Activated CD4-positive, alpha-beta memory T cell treated with anti-CD3 and anti-CD28 coated beads for 36 hours (primary cell): ENCODE measurements at regions of chr3 and their contacts with region 1.

Region 1: DNA sequence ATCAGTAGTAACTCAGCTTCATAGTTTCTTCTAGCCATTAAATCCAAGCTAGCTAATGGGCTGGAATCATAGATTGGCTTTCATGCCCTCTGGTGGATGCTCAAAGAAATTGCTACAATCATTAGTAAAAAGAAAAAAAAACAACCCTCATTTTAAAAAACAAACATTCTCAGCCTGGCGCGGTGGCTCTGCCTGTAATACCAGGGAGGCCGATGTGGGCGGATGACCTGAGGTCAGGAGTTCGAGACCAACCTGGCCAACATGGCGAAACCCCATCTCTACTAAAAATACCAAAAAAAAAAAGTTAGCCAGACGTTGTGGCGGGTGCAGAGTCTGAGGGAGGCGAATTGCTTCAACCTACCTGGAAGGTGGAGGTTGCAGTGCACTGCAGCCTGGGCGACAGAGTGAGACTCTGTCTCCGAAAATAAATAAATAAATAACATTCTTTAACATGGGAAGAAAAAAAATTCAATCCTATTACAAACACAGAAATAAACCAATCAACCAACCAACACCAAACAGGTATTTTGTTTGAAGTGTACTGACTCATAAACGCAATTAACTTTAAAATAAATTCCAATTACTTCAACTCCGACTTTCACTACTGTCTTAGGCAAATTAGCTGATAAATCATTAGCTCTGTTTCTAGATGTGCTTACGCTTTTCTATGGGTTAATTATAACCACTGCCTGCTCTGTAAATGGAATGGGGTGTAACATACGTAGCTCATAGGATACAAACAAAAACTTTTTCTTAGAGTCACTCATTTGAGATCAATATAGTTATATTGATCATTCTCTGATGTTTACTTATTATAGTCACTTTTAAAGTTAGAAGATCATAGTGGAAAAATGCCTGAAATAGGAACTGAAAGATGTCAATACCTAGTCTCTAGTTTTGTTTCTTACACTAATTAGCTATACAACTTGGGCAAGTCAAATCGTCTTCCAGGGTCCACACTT is 24.9 kb downstream of the TMEM207 start:
- DNase-seq: peak; percentile 66
- H3K4me3 Mint-ChIP-seq: peak overlapping the region; percentile 24
- H3K27ac Mint-ChIP-seq: no peak overlapping the region
- H3K4me1 Mint-ChIP-seq: peaks cover 8% of the 10 kb centered on the region
- H3K27me3 Mint-ChIP-seq: no peaks in the 10 kb centered on the region

Region 2: GRCh38 chr3:190224863-190225692 is 199.7 kb before region 1 on chr3:
- CTCF ChIA-PET with region 1: interaction called, 11 read pairs
- POLR2A ChIA-PET with region 1: no interaction called
- intact Hi-C with region 1: loop called (anchors 1 kb)
- DNase-seq: no peak
- H3K4me3 Mint-ChIP-seq: no peak overlapping the region
- H3K27ac Mint-ChIP-seq: no peak overlapping the region
- H3K4me1 Mint-ChIP-seq: peaks cover 2% of the 10 kb centered on the region
- H3K27me3 Mint-ChIP-seq: peaks cover 10% of the 10 kb centered on the region

Region 3: GRCh38 chr3:190747571-190747970 is 322.8 kb after region 1 on chr3:
- CTCF ChIA-PET with region 1: no interaction called
- POLR2A ChIA-PET with region 1: no interaction called
- intact Hi-C with region 1: no loop called
- DNase-seq: no peak
- H3K4me3 Mint-ChIP-seq: no peak overlapping the region
- H3K27ac Mint-ChIP-seq: no peak overlapping the region
- H3K4me1 Mint-ChIP-seq: no peaks in the 10 kb centered on the region
- H3K27me3 Mint-ChIP-seq: no peaks in the 10 kb centered on the region